ENCODE measurements at regions of chr5 and their contacts with region 1.

Region 1: GRCh38 chr5:76386360-76386759 is 16.7 kb upstream of the IQGAP2 start:
- DNase-seq: peak in 1 of 2 experiments; percentile 57
- H3K4me3 ChIP-seq: no peak overlapping the region
- H3K27ac ChIP-seq: no peak overlapping the region
- H3K4me1 ChIP-seq: peaks cover 51% of the 10 kb centered on the region
- H3K27me3 ChIP-seq: no peaks in the 10 kb centered on the region
- CTCF ChIP-seq: no peak

Region 2: DNA sequence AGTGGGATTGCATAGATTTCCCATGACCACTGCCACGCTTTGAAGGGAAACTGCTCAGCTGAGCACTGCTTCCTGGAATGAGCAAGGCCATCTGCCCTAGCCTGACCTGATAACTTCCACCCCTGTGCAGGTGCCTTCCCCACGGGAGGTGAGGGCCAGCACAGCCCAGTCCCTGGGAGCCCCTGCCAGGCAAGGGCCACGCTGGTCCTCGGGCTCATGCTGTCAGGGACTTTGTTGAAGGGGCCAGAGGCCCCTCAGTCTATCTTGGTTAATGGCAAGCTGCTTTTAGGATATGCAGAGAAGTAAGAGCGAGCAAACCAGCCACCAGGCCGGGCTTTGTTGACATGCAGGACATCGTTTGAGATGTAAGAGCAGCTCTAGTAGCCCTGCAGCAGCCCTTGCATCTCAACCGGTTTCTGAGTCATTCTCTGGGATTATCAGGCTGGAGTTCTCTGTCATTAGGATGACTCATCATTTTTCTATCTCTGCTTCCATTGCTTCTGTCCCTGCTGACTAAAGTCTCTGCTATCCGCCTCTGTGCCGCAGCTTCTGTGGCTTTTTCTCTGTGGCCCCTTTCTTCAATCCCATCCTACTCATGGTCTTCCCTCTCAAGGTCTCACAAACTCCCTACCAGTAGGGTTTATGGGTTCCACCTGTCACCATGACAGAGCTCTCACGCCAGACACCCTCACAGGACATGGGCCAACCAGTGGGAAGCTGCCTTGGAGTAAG is 13.9 kb before region 1 on chr5:
- CTCF ChIA-PET with region 1: no interaction called
- POLR2A ChIA-PET with region 1: interaction called, 30 read pairs
- intact Hi-C with region 1: no loop called
- DNase-seq: peak; percentile 68 to 95
- H3K4me3 ChIP-seq: peak overlapping the region; percentile 13; the same call in 1 of the 2 replicates
- H3K27ac ChIP-seq: peak overlapping the region; percentile 81
- H3K4me1 ChIP-seq: peaks cover 21% of the 10 kb centered on the region
- H3K27me3 ChIP-seq: no peaks in the 10 kb centered on the region
- CTCF ChIP-seq: no peak

Region 3: GRCh38 chr5:77628840-77629508 is 1242.6 kb after region 1 on chr5:
- CTCF ChIA-PET with region 1: interaction called, 11 read pairs
- POLR2A ChIA-PET with region 1: no interaction called
- intact Hi-C with region 1: no loop called
- DNase-seq: no peak
- H3K4me3 ChIP-seq: no peak overlapping the region
- H3K27ac ChIP-seq: no peak overlapping the region
- H3K4me1 ChIP-seq: no peaks in the 10 kb centered on the region
- H3K27me3 ChIP-seq: peaks cover 40% of the 10 kb centered on the region
- CTCF ChIP-seq: no peak

Measured in PC-9 (cell line).